ENCODE measurements at regions of chr5 and their contacts with region 1.

Region 1: DNA sequence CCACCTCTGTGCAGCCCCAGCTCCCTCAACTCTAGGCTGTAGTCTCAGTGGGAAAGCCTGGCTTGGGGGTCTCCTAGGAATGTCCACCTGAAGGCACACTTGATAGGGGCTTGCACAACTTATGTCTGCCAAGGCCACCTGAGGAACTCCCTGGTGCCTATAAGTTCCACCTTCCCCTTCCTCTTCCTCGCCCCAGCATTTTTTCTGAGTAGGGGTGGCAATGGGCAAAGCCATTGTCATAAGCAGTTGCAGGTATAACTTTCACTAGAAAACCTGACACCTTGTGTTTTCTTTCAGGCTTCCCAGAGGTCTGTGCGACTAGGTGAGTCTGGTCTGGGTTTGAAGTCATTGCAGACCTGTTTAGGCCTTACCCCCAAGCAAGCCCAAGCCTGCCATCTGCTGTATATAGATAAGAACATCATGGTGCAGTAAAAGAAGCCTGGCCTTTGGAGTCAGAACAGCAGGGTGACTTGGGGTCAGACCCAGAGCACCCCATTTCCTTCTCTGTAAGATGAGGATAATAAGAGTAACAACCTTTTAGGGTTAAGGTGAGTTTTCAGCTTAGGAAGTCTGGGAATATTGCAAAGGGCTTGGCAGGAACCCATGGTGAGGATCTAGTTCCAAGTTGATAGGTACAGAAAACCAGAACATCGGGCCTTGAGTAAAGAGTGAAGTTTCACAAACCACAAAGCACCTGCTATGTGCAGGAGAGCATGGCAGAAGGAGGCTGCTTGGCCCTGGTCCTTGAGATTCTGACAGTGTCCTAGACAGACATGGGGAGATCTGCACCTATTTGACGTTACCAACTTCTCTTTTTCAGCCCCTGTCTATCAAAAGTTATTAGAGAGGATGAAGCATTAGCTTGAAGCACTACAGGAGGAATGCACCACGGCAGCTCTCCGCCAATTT is 33.8 kb downstream of the TGFBI start:
- DNase-seq: peak; percentile 74
- ATAC-seq: peak; percentile 67
- H3K4me3 ChIP-seq: no peak overlapping the region
- H3K27ac ChIP-seq: no peak overlapping the region
- H3K4me1 ChIP-seq: peaks cover 15% of the 10 kb centered on the region
- H3K27me3 ChIP-seq: no peaks in the 10 kb centered on the region
- CTCF ChIP-seq: peak; percentile 78

Region 2: DNA sequence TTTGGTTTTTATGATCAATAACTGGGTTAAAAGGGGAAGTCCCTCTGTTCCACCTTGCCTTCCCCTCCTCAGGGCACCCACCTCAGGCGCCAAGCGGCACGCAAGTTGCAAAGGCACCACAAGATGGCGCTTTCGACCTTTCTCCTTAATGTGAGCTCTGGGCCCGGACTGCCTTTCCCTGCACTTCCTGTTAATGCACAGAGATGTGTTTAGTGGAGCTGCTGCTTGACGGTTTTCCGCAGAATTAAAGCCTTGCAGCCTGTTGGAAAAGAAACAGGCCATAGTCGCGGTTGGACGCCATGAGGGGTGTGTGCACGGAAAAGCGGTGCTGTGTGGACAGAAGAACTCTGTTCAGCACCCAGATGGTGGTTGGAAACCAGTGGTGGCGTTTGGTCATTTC is 501.8 kb before region 1 on chr5:
- CTCF ChIA-PET with region 1: no interaction called
- POLR2A ChIA-PET with region 1: no interaction called
- intact Hi-C with region 1: loop called (anchors 10 kb)
- DNase-seq: peak; percentile 78
- ATAC-seq: peak; percentile 94
- H3K4me3 ChIP-seq: no peak overlapping the region
- H3K27ac ChIP-seq: no peak overlapping the region
- H3K4me1 ChIP-seq: no peaks in the 10 kb centered on the region
- H3K27me3 ChIP-seq: peaks cover 5% of the 10 kb centered on the region; the same call in 1 of the 2 replicates
- CTCF ChIP-seq: peak; percentile 75

Region 3: GRCh38 chr5:135887351-135887864 is 175.2 kb before region 1 on chr5:
- CTCF ChIA-PET with region 1: no interaction called
- POLR2A ChIA-PET with region 1: no interaction called
- intact Hi-C with region 1: loop called (anchors 1 kb)
- DNase-seq: peak; percentile 80
- ATAC-seq: peak; percentile 99
- H3K4me3 ChIP-seq: no peak overlapping the region
- H3K27ac ChIP-seq: no peak overlapping the region
- H3K4me1 ChIP-seq: peaks cover 5% of the 10 kb centered on the region; the same call in 1 of the 2 replicates
- H3K27me3 ChIP-seq: no peaks in the 10 kb centered on the region
- CTCF ChIP-seq: peak; percentile 79

Region 4: DNA sequence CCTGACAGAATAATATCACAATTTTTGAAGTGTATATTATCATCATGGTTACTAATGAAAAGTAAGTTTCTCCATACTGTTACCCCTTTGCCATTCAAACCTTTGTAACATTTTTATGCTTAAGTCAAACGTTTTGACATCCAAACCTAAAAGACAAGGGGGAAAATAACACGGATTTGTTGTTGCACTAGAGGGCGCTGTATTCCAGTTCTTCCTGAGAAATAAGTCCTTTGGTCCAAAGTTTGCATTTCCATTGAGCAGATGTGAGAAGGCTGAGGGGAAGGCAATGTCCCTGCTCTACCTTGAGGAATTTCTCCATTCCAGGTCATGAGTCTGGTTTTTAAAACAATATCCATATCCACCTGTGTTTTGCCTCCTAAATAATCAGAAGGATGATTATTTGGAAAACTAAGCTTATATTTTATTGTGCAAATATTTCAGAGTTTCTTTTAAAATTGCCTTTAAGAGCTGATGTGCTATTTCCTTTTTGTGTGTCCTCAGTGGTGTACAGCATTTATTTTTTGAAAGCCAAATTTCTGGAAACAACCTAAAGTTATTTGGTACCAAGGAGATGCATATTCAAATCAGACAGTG is 117.6 kb before region 1 on chr5:
- CTCF ChIA-PET with region 1: interaction called, 3 read pairs
- POLR2A ChIA-PET with region 1: no interaction called
- intact Hi-C with region 1: loop called (anchors 1 kb)
- DNase-seq: peak; percentile 80
- ATAC-seq: peak; percentile 46
- H3K4me3 ChIP-seq: no peak overlapping the region
- H3K27ac ChIP-seq: no peak overlapping the region
- H3K4me1 ChIP-seq: no peaks in the 10 kb centered on the region
- H3K27me3 ChIP-seq: no peaks in the 10 kb centered on the region
- CTCF ChIP-seq: peak; percentile 80

Region 5: GRCh38 chr5:135964670-135965320 is 97.8 kb before region 1 on chr5:
- CTCF ChIA-PET with region 1: no interaction called
- POLR2A ChIA-PET with region 1: no interaction called
- intact Hi-C with region 1: no loop called
- DNase-seq: no peak
- ATAC-seq: no peak
- H3K4me3 ChIP-seq: no peak overlapping the region
- H3K27ac ChIP-seq: no peak overlapping the region
- H3K4me1 ChIP-seq: no peaks in the 10 kb centered on the region
- H3K27me3 ChIP-seq: no peaks in the 10 kb centered on the region
- CTCF ChIP-seq: no peak

Region 6: DNA sequence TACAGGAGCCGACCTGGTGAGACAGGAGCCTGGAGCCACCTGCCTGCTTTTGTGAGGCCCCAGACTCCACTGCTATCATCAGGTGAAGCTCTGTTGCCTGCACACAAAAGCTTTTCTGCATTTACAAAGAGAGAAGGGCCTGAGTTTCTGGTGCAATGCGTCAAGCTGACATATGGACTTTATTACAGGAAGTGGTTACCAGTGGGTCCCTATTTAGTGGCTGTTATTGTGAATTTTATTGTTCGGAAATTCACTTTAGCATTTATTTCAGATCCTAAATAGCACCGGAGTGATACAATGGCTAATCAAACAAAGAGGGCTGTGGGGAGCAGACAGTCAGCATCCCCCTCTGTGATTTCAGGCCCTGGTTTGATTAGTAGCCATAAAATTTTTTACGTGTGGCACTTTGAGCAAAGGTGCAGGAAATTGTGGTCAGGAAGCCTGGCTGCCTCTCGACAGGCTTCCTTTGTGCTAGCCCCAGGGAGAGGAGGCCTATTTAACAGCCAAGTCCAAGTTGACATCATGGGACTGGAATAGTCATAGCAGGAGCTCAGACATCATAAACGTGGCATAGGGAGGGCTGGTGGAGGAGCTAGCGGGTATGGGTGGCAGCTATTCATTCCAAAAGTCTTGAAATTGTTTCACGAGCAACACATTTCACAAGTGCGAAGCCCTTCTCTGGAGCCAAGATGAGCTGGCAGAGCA is 25.5 kb before region 1 on chr5:
- CTCF ChIA-PET with region 1: no interaction called
- POLR2A ChIA-PET with region 1: no interaction called
- intact Hi-C with region 1: loop called (anchors 2 kb)
- DNase-seq: peak; percentile 89
- ATAC-seq: peak; percentile 91
- H3K4me3 ChIP-seq: no peak overlapping the region
- H3K27ac ChIP-seq: peak overlapping the region; percentile 29
- H3K4me1 ChIP-seq: peaks cover 51% of the 10 kb centered on the region
- H3K27me3 ChIP-seq: no peaks in the 10 kb centered on the region
- CTCF ChIP-seq: no peak

Region 7: DNA sequence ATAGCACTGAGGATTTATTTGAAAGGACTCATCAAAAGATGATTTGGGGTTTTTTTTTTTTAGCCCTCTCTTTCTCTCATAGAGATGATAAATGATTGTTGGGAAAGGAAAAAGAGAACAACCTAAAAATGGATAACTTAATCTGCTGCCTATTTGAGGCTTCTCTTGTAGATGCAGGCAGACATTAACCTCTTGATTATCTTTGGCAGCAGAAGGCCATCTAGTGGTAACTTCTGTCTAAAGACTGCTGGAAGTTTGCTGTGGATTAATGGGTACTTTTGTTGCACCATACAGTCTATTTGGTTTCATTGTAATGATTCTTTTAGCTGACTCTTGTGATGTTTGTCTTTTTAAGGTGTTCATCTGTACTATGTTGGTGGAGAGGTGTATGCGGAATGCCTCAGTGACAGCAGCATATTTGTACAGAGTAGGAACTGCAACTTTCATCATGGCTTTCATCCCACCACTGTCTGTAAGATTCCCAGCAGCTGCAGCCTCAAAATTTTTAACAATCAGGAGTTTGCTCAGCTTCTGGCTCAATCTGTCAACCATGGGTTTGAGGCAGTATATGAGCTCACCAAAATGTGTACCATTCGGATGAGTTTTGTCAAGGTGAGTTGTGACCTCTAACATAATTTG is 111.5 kb after region 1 on chr5:
- CTCF ChIA-PET with region 1: no interaction called
- POLR2A ChIA-PET with region 1: no interaction called
- intact Hi-C with region 1: loop called (anchors 1 kb)
- DNase-seq: peak; percentile 50
- ATAC-seq: peak; percentile 79
- H3K4me3 ChIP-seq: no peak overlapping the region
- H3K27ac ChIP-seq: no peak overlapping the region
- H3K4me1 ChIP-seq: no peaks in the 10 kb centered on the region
- H3K27me3 ChIP-seq: no peaks in the 10 kb centered on the region
- CTCF ChIP-seq: peak; percentile 75

Region 8: GRCh38 chr5:136212252-136212721 is 149.7 kb after region 1 on chr5:
- CTCF ChIA-PET with region 1: no interaction called
- POLR2A ChIA-PET with region 1: no interaction called
- intact Hi-C with region 1: loop called (anchors 1 kb)
- DNase-seq: peak; percentile 55
- ATAC-seq: peak; percentile 66; the same call in 1 of the 2 replicates
- H3K4me3 ChIP-seq: no peak overlapping the region
- H3K27ac ChIP-seq: no peak overlapping the region
- H3K4me1 ChIP-seq: no peaks in the 10 kb centered on the region
- H3K27me3 ChIP-seq: peaks cover 8% of the 10 kb centered on the region; the same call in 1 of the 2 replicates
- CTCF ChIP-seq: peak; percentile 90